HEK293 (cell line): ENCODE measurements at regions of chr4 and their contacts with region 1.

Region 1: GRCh38 chr4:147019061-147019460 is 73.4 kb upstream of the TTC29 start:
- H3K4me3 ChIP-seq: no peak overlapping the region
- H3K27ac ChIP-seq: no peak overlapping the region
- H3K4me1 ChIP-seq: no peaks in the 10 kb centered on the region
- CTCF ChIP-seq: peak; percentile 18; the same call in 1 of the 2 replicates

Region 2: GRCh38 chr4:146699910-146700309 is 319.2 kb before region 1 on chr4:
- CTCF ChIA-PET with region 1: no interaction called
- POLR2A ChIA-PET with region 1: no interaction called
- H3K4me3 ChIP-seq: no peak overlapping the region
- H3K27ac ChIP-seq: no peak overlapping the region
- H3K4me1 ChIP-seq: no peaks in the 10 kb centered on the region
- CTCF ChIP-seq: no peak

Region 3: GRCh38 chr4:147034372-147034771 is 15.3 kb after region 1 on chr4:
- CTCF ChIA-PET with region 1: no interaction called
- POLR2A ChIA-PET with region 1: no interaction called
- H3K4me3 ChIP-seq: no peak overlapping the region
- H3K27ac ChIP-seq: no peak overlapping the region
- H3K4me1 ChIP-seq: no peaks in the 10 kb centered on the region
- CTCF ChIP-seq: no peak

Region 4: DNA sequence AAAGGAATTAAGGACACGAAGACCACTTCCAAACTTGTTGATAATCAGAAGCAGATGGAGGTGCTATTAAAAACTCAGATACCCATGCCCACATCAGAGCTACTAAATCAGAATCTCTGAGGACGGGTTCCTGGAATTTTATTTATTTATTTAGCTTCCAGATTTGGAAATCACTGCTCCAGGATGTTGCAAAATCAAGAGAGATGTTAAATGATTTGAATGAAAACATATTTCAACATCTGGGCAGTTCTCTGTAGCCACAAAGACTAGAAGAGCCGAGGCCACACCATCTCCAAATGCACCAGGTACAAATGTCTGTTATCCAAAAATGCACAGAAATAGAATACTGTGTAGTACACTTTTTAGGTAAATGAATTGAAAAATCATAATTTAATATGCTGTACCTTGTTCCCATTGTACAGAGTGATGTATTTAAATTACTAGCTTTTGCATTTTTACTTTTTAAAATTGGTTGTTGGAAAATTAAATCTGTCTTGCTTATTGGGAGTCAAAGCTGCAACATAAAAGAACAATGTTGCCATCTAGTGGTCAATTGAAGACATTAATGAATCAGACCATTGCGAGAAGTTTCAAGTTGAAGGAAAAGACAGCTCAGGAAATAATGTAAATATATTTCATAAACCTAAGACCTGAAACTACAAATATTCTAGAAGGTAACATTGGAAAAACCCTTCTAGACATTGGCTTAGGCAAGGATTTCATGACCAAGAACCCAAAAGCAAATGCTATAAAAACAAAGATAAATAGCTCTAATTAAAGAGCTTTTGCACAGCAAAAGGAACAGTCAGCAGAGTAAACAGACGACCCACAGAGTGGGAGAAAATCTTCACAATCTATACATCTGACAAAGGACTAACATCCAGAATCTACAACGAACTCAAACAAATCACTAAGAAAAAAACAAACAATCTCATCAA is 77.9 kb after region 1 on chr4:
- CTCF ChIA-PET with region 1: interaction called, 26 read pairs
- POLR2A ChIA-PET with region 1: interaction called, 4 read pairs
- H3K4me3 ChIP-seq: no peak overlapping the region
- H3K27ac ChIP-seq: no peak overlapping the region
- H3K4me1 ChIP-seq: no peaks in the 10 kb centered on the region
- CTCF ChIP-seq: no peak

Region 5: GRCh38 chr4:147447786-147448185 is 428.7 kb after region 1 on chr4:
- CTCF ChIA-PET with region 1: no interaction called
- POLR2A ChIA-PET with region 1: no interaction called
- H3K4me3 ChIP-seq: no peak overlapping the region
- H3K27ac ChIP-seq: no peak overlapping the region
- H3K4me1 ChIP-seq: no peaks in the 10 kb centered on the region
- CTCF ChIP-seq: no peak